ENCODE measurements at regions of chr12 and their contacts with region 1.

Region 1: GRCh38 chr12:49358483-49359141 is 8.7 kb upstream of the SPATS2 start:
- DNase-seq: no peak
- ATAC-seq: peak; percentile 99
- H3K4me3 ChIP-seq: no peak overlapping the region
- H3K27ac ChIP-seq: no peak overlapping the region
- H3K4me1 ChIP-seq: no peaks in the 10 kb centered on the region
- H3K27me3 ChIP-seq: no peaks in the 10 kb centered on the region
- CTCF ChIP-seq: peak; percentile 81 to 91 (median 81)
- EP300 ChIP-seq: no peak
- POLR2A ChIP-seq: no peak
- RAD21 ChIP-seq: peak; percentile 98

Region 2: DNA sequence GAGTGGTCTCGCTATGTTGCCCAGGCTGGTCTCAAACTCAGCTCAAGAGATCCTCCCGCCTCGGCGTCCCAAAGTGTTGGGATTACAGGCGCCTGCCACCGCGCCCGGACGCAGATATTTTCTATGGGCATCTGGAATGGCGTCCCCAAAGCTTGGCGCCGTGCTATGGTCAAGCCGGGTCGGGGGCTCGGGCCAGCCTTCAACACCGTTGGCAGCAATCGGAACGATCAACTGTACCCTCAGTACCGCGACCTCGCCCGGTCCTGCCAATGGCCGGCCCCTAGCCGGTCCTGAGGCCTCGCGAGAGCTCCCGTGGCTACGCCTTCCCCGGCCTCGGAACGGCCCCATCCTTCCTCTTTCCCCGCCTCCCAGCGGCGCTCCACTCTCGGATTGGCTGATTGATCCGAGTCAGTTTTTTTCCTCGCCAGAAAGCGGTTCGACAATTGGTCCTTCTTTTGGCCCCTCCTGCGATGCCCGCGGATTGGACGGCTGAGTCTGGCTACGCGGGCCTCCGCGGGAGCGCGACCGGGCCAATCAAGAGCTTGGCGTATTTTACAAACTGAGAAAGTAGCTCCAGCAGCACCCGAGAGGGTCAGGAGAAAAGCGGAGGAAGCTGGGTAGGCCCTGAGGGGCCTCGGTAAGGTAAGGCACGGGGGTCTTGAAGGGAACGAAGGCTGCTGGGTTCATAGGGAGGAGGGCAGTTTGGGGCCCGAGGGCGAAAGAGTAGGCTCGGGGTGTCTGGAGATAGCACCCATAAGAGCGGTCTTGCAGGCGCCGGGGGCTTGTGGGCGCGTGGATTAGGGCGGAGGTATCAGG is 35.7 kb before region 1 on chr12 and contains the start of gene TROAP:
- CTCF ChIA-PET with region 1: interaction called, 23 read pairs
- POLR2A ChIA-PET with region 1: no interaction called
- RAD21 ChIA-PET with region 1: interaction called, 10 read pairs
- SMC1A ChIA-PET with region 1: interaction called, 6 read pairs
- in situ Hi-C with region 1: no loop called
- intact Hi-C with region 1: no loop called
- DNase-seq: peak; percentile 96
- ATAC-seq: peak; percentile 99
- H3K4me3 ChIP-seq: peak within 1 kb of the TSS; percentile 95
- H3K27ac ChIP-seq: peak within 1 kb of the TSS; percentile 87
- H3K4me1 ChIP-seq: peaks cover 9% of the 10 kb centered on the region
- H3K27me3 ChIP-seq: no peaks in the 10 kb centered on the region
- CTCF ChIP-seq: no peak
- EP300 ChIP-seq: no peak
- POLR2A ChIP-seq: peak; percentile 95
- RAD21 ChIP-seq: no peak
- polyA plus RNA-seq, gene TROAP: 26.8 to 46.9 TPM

Region 3: GRCh38 chr12:49400304-49400703 is 41.7 kb after region 1 on chr12:
- CTCF ChIA-PET with region 1: interaction called, 6 read pairs
- POLR2A ChIA-PET with region 1: no interaction called
- RAD21 ChIA-PET with region 1: interaction called, 4 read pairs
- SMC1A ChIA-PET with region 1: interaction called, 20 read pairs
- in situ Hi-C with region 1: no loop called
- intact Hi-C with region 1: no loop called
- DNase-seq: no peak
- ATAC-seq: no peak
- H3K4me3 ChIP-seq: no peak overlapping the region
- H3K27ac ChIP-seq: no peak overlapping the region
- H3K4me1 ChIP-seq: no peaks in the 10 kb centered on the region
- H3K27me3 ChIP-seq: no peaks in the 10 kb centered on the region
- CTCF ChIP-seq: no peak
- EP300 ChIP-seq: no peak
- POLR2A ChIP-seq: no peak
- RAD21 ChIP-seq: no peak

Region 4: GRCh38 chr12:49462083-49462744 is 103.6 kb after region 1 on chr12:
- CTCF ChIA-PET with region 1: interaction called, 11 read pairs
- POLR2A ChIA-PET with region 1: no interaction called
- RAD21 ChIA-PET with region 1: interaction called, 5 read pairs
- SMC1A ChIA-PET with region 1: interaction called, 12 read pairs
- in situ Hi-C with region 1: no loop called
- intact Hi-C with region 1: no loop called
- DNase-seq: no peak
- ATAC-seq: no peak
- H3K4me3 ChIP-seq: no peak overlapping the region
- H3K27ac ChIP-seq: no peak overlapping the region
- H3K4me1 ChIP-seq: no peaks in the 10 kb centered on the region
- H3K27me3 ChIP-seq: no peaks in the 10 kb centered on the region
- CTCF ChIP-seq: no peak
- EP300 ChIP-seq: no peak
- POLR2A ChIP-seq: no peak
- RAD21 ChIP-seq: no peak

Region 5: DNA sequence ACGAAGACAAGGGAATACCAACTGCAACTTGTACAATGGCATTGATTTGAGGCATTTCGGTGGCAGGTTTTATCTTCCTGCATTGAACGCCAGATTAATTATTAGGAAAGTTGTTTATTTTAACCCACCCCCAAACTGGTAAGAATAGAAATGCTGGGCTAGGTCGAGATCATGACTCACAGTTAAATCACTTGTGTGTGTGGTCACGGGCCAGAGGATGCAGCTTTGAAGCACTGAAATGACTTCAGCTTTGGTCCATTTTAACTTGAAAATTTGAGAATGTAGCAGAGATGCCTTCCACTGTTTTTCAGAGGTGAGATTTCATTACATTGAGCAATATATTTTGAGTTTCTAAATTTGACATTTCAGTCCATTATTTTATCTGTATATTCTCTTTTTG is 156.7 kb after region 1 on chr12:
- CTCF ChIA-PET with region 1: interaction called, 712 read pairs
- POLR2A ChIA-PET with region 1: interaction called, 8 read pairs
- RAD21 ChIA-PET with region 1: interaction called, 258 read pairs
- SMC1A ChIA-PET with region 1: interaction called, 740 read pairs
- in situ Hi-C with region 1: loop called (anchors 5 kb)
- intact Hi-C with region 1: loop called (anchors 1 kb)
- DNase-seq: no peak
- ATAC-seq: no peak
- H3K4me3 ChIP-seq: no peak overlapping the region
- H3K27ac ChIP-seq: no peak overlapping the region
- H3K4me1 ChIP-seq: no peaks in the 10 kb centered on the region
- H3K27me3 ChIP-seq: no peaks in the 10 kb centered on the region
- CTCF ChIP-seq: no peak
- EP300 ChIP-seq: no peak
- POLR2A ChIP-seq: no peak
- RAD21 ChIP-seq: no peak

Region 6: DNA sequence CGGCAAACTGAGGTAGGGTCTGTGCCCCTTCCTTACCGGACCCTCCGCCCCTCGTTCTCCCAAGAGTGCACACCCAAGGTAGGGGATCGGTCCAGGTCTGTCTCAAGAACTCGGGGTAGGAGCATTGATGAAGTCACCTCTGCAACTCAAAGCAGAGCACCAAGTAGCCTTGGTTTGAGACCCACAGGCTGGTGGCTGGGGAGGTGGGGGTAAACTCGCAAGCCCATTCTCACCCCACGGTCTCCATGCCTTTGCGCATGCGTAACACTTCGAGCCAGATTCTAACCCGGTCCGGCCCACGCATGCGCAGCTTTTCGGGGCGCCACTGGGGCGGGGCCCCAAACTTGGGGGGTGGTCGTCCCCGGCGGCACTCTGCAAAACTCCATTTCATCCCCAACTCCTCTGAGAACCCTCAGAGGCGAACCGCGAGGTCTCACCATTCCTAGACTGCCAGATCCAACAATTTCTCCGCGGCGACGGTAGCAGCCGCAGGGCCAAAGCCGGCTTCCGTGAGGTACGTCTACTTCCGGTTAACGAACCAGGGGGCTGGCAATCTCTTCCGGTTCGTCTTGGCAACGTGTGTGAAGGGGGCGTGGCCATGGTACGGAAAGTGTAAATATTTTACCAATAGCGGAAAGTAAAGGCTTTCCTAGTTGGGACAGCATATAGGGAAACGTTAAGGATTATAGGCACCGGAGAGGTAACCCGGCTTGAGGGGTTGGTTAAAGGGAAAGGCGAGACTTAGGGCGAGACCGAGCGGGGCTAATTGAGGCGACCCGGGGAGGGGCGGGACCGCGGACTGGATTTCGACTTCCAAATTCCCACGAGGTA is 209.2 kb after region 1 on chr12 and contains the start of gene MCRS1:
- CTCF ChIA-PET with region 1: interaction called, 16 read pairs
- POLR2A ChIA-PET with region 1: interaction called, 3 read pairs
- RAD21 ChIA-PET with region 1: interaction called, 3 read pairs
- SMC1A ChIA-PET with region 1: interaction called, 11 read pairs
- in situ Hi-C with region 1: no loop called
- intact Hi-C with region 1: no loop called
- DNase-seq: peak; percentile 80
- ATAC-seq: peak; percentile 92
- H3K4me3 ChIP-seq: peak within 1 kb of the TSS; percentile 99
- H3K27ac ChIP-seq: peak within 1 kb of the TSS; percentile 91
- H3K4me1 ChIP-seq: peaks cover 8% of the 10 kb centered on the region
- H3K27me3 ChIP-seq: no peaks in the 10 kb centered on the region
- CTCF ChIP-seq: no peak
- EP300 ChIP-seq: no peak
- POLR2A ChIP-seq: peak; percentile 98
- RAD21 ChIP-seq: no peak
- polyA plus RNA-seq, gene MCRS1: 34.3 to 52.4 TPM